Naive thymus-derived CD4-positive, alpha-beta T cell (primary cell): ENCODE measurements at regions of chr17 and their contacts with region 1.

Region 1: GRCh38 chr17:48724251-48725003 is 1.4 kb downstream of the PRAC2 start:
- DNase-seq: peak; percentile 46 to 73 (median 65)
- ATAC-seq: peak; percentile 81
- H3K4me3 ChIP-seq: no peak overlapping the region
- H3K4me3 Mint-ChIP-seq: peak overlapping the region; percentile 64 to 82 (median 74)
- H3K27ac ChIP-seq: no peak overlapping the region
- H3K27ac Mint-ChIP-seq: peak overlapping the region in 2 of 9 donors; percentile 34 to 87
- H3K4me1 ChIP-seq: peaks cover 27 to 36% of the 10 kb centered on the region in 2 donors
- H3K4me1 Mint-ChIP-seq: peaks cover 26 to 61% (median 41%) of the 10 kb centered on the region in 7 donors
- H3K27me3 ChIP-seq: peaks cover 43 to 92% of the 10 kb centered on the region in 2 donors
- H3K27me3 Mint-ChIP-seq: peaks cover 87 to 99% (median 90%) of the 10 kb centered on the region in 5 donors

Region 2: GRCh38 chr17:47821424-47822391 is 902.7 kb before region 1 on chr17 and contains the start of gene OSBPL7:
- CTCF ChIA-PET with region 1: no interaction called
- POLR2A ChIA-PET with region 1: no interaction called
- intact Hi-C with region 1: no loop called
- DNase-seq: peak; percentile 44 to 71 (median 66)
- ATAC-seq: peak; percentile 96
- H3K4me3 ChIP-seq: peak within 1 kb of the TSS; percentile 78
- H3K4me3 Mint-ChIP-seq: peak within 1 kb of the TSS; percentile 96 to 99 (median 97)
- H3K27ac ChIP-seq: peak within 1 kb of the TSS; percentile 80
- H3K27ac Mint-ChIP-seq: peak within 1 kb of the TSS; percentile 86 to 96 (median 91)
- H3K4me1 ChIP-seq: peaks cover 5 to 23% of the 10 kb centered on the region in 2 donors
- H3K4me1 Mint-ChIP-seq: peaks cover 7 to 33% (median 24%) of the 10 kb centered on the region in 7 donors
- H3K27me3 ChIP-seq: no peaks in the 10 kb centered on the region
- H3K27me3 Mint-ChIP-seq: no peaks in the 10 kb centered on the region
- total RNA-seq, gene OSBPL7: 36.6 to 46.1 (median 41.4) TPM

Region 3: GRCh38 chr17:48610282-48611211 is 113.9 kb before region 1 on chr17 and contains the start of gene HOXB7:
- CTCF ChIA-PET with region 1: interaction called, 3 read pairs
- POLR2A ChIA-PET with region 1: no interaction called
- intact Hi-C with region 1: loop called in 1 of 2 experiments (anchors 5 kb)
- DNase-seq: peak in 3 of 9 donors; percentile 21 to 73 (median 32)
- ATAC-seq: peak; percentile 36
- H3K4me3 ChIP-seq: peak within 1 kb of the TSS; percentile 81
- H3K4me3 Mint-ChIP-seq: peak within 1 kb of the TSS; percentile 74 to 97 (median 90)
- H3K27ac ChIP-seq: no peak within 1 kb of the TSS
- H3K27ac Mint-ChIP-seq: peak within 1 kb of the TSS in 6 of 9 donors; percentile 26 to 77 (median 70)
- H3K4me1 ChIP-seq: peaks cover 28 to 42% of the 10 kb centered on the region in 2 donors
- H3K4me1 Mint-ChIP-seq: peaks cover 30 to 49% (median 44%) of the 10 kb centered on the region in 7 donors
- H3K27me3 ChIP-seq: peaks cover 11 to 46% of the 10 kb centered on the region in 2 donors
- H3K27me3 Mint-ChIP-seq: peaks cover 73 to 83% (median 77%) of the 10 kb centered on the region in 5 donors
- total RNA-seq, gene HOXB7: 0.31 TPM in 1 of 5 experiments, not detected in the others

Region 4: GRCh38 chr17:48642439-48643263 is 81.8 kb before region 1 on chr17:
- CTCF ChIA-PET with region 1: no interaction called
- POLR2A ChIA-PET with region 1: no interaction called
- intact Hi-C with region 1: loop called in 1 of 2 experiments (anchors 5 kb)
- DNase-seq: no peak
- ATAC-seq: no peak
- H3K4me3 ChIP-seq: no peak overlapping the region
- H3K4me3 Mint-ChIP-seq: peak overlapping the region in 2 of 10 donors; percentile 44 to 49
- H3K27ac ChIP-seq: no peak overlapping the region
- H3K27ac Mint-ChIP-seq: no peak overlapping the region
- H3K4me1 ChIP-seq: peaks cover 0 to 12% of the 10 kb centered on the region in 2 donors
- H3K4me1 Mint-ChIP-seq: peaks cover 11 to 27% (median 17%) of the 10 kb centered on the region in 7 donors
- H3K27me3 ChIP-seq: peaks cover 0 to 45% of the 10 kb centered on the region in 2 donors
- H3K27me3 Mint-ChIP-seq: peaks cover 78 to 97% (median 88%) of the 10 kb centered on the region in 5 donors

Region 5: GRCh38 chr17:48997083-48997826 is 272.8 kb after region 1 on chr17 and contains the start of gene IGF2BP1:
- CTCF ChIA-PET with region 1: no interaction called
- POLR2A ChIA-PET with region 1: interaction called, 3 read pairs
- intact Hi-C with region 1: loop called in 1 of 2 experiments (anchors 10 kb)
- DNase-seq: peak in 4 of 9 donors; percentile 15 to 31 (median 23)
- ATAC-seq: peak; percentile 24
- H3K4me3 ChIP-seq: peak within 1 kb of the TSS; percentile 12
- H3K4me3 Mint-ChIP-seq: peak within 1 kb of the TSS; percentile 64 to 82 (median 72)
- H3K27ac ChIP-seq: no peak within 1 kb of the TSS
- H3K27ac Mint-ChIP-seq: peak within 1 kb of the TSS in 2 of 9 donors; percentile 65 to 82
- H3K4me1 ChIP-seq: peaks cover 8 to 22% of the 10 kb centered on the region in 2 donors
- H3K4me1 Mint-ChIP-seq: peaks cover 14 to 40% (median 23%) of the 10 kb centered on the region in 7 donors
- H3K27me3 ChIP-seq: peaks cover 35 to 74% of the 10 kb centered on the region in 2 donors
- H3K27me3 Mint-ChIP-seq: peaks cover 79 to 88% (median 84%) of the 10 kb centered on the region in 5 donors
- total RNA-seq, gene IGF2BP1: not detected